ENCODE measurements at regions of chr2 and their contacts with region 1.

Region 1: GRCh38 chr2:137644731-137645130 is 319.5 kb upstream of the HNMT start:
- DNase-seq: no peak
- CTCF ChIP-seq: no peak

Region 2: GRCh38 chr2:137655814-137656213 is 11.1 kb after region 1 on chr2:
- CTCF ChIA-PET with region 1: interaction called, 16 read pairs
- POLR2A ChIA-PET with region 1: no interaction called
- DNase-seq: no peak
- CTCF ChIP-seq: no peak

Region 3: GRCh38 chr2:137938204-137938603 is 293.5 kb after region 1 on chr2:
- CTCF ChIA-PET with region 1: no interaction called
- POLR2A ChIA-PET with region 1: no interaction called
- DNase-seq: no peak
- CTCF ChIP-seq: no peak

Measured in GM10248 (cell line).